Activated CD4-positive, alpha-beta memory T cell treated with anti-CD3 and anti-CD28 coated beads for 36 hours (primary cell): ENCODE measurements at regions of chr1 and their contacts with region 1.

Region 1: GRCh38 chr1:116763787-116764465 is 9.7 kb downstream of the CD2 start:
- DNase-seq: peak; percentile 79
- H3K4me3 Mint-ChIP-seq: peak overlapping the region; percentile 99
- H3K27ac Mint-ChIP-seq: peak overlapping the region; percentile 99
- H3K4me1 Mint-ChIP-seq: peaks cover 88% of the 10 kb centered on the region
- H3K27me3 Mint-ChIP-seq: peaks cover 3% of the 10 kb centered on the region

Region 2: DNA sequence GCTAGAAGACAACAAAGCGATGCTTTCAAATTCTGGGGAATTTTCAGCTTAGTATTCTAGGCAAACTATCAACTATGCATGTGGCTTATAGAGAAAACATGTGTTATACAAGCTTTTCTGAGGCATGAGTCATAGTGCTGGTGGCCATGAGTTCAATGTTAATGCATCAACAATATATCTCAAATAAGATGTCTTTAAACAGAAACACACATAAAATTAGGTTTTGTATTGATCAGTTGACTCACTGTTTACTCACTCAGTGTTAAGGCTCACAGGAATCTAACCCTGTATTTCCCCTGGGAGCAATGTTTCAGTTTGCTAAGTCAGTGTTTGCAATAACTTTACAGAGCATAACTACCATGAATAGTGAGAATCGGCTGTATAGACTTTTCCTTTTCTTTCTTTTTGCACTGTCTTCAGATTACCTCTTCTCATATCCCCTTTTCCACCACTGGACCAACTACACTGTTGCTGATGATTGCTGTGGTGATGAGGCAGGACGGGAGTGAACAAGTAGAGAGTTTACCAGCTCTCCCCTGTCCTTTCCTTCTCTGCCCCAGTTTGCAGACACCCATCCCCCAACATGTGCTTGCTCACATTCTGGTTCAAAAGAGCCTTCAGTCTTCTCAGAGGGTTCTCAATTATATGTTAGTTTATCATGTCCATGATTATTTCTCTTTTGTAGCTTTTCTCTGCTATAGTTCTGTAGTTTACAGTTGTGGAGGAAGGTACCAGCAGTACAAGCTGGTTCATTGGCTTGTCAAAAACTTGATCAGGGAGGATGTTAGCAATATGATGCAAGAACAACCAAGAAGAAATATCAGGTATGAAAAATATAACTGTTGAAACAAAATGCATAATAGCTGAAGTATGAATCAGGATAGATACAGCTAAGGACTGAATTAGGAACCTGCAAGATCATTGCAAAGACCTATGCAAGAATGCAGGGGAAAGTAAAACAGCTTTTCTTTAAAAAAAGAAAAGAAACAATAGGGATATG is 14.2 kb after region 1 on chr1:
- CTCF ChIA-PET with region 1: interaction called, 23 read pairs
- POLR2A ChIA-PET with region 1: interaction called, 629 read pairs
- intact Hi-C with region 1: no loop called
- DNase-seq: no peak
- H3K4me3 Mint-ChIP-seq: peak overlapping the region; percentile 41
- H3K27ac Mint-ChIP-seq: peak overlapping the region; percentile 89
- H3K4me1 Mint-ChIP-seq: peaks cover 46% of the 10 kb centered on the region
- H3K27me3 Mint-ChIP-seq: no peaks in the 10 kb centered on the region

Region 3: DNA sequence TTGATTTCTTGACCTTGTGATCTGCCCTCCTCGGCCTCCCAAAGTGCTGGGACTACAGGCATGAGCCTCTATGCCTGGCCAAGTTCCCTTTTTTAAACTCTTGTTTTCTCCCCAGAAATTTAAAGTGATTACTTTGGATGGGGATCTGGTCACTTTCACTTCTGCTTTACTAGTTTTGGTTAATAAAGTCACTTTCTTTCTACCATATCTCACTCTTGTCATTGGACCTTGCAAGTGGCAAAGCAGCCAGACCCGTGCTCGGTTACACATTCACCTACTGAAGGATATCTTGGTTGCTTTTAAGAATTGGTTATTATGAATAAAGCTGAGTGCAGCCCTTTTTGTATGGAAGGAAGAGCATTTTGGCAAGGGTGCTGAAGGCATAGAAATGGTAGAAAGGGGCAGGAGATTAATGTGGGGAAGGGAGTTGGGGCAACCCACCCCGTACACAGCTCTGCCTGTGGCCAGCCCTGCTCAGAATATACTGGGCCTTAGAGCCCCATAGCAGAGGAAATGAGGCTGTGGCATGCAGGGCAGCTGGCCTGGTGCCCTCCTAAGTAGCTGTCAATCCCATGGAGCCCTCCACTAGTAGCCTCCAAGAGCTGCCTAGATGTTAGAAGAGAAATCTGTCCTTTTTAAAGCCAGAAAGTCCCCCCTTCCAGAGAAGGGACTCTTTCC is 31.0 kb after region 1 on chr1:
- CTCF ChIA-PET with region 1: interaction called, 103 read pairs
- POLR2A ChIA-PET with region 1: interaction called, 1,099 read pairs
- intact Hi-C with region 1: no loop called
- DNase-seq: no peak
- H3K4me3 Mint-ChIP-seq: no peak overlapping the region
- H3K27ac Mint-ChIP-seq: peak overlapping the region; percentile 40
- H3K4me1 Mint-ChIP-seq: peaks cover 66% of the 10 kb centered on the region
- H3K27me3 Mint-ChIP-seq: no peaks in the 10 kb centered on the region

Region 4: DNA sequence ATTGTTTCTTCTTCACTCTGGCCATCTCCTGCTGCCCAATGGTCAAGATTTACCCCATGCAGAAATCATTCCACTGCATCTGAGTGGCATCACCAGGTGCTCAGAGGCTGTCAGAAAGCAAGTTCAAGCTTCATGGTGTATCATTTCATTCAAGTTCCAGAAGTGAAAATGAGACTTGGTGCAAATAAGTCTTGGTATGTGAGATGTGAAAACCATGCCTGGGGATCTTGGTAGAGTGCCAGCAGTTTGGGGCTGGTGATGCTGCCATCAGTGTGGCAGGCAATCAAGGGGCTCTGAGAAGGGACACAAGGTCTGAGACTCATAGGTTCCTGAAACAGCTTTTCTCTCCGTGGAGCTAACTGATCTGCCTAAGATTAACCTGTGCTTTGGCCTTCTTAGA is 42.3 kb after region 1 on chr1:
- CTCF ChIA-PET with region 1: interaction called, 103 read pairs
- POLR2A ChIA-PET with region 1: interaction called, 1,099 read pairs
- intact Hi-C with region 1: loop called (anchors 1 kb)
- DNase-seq: peak; percentile 91
- H3K4me3 Mint-ChIP-seq: peak overlapping the region; percentile 79
- H3K27ac Mint-ChIP-seq: peak overlapping the region; percentile 99
- H3K4me1 Mint-ChIP-seq: peaks cover 78% of the 10 kb centered on the region
- H3K27me3 Mint-ChIP-seq: no peaks in the 10 kb centered on the region

Region 5: GRCh38 chr1:116873680-116874271 is 109.8 kb after region 1 on chr1:
- CTCF ChIA-PET with region 1: interaction called, 6 read pairs
- POLR2A ChIA-PET with region 1: interaction called, 14 read pairs
- intact Hi-C with region 1: no loop called
- DNase-seq: peak; percentile 62
- H3K4me3 Mint-ChIP-seq: no peak overlapping the region
- H3K27ac Mint-ChIP-seq: peak overlapping the region; percentile 35
- H3K4me1 Mint-ChIP-seq: peaks cover 20% of the 10 kb centered on the region
- H3K27me3 Mint-ChIP-seq: no peaks in the 10 kb centered on the region

Region 6: DNA sequence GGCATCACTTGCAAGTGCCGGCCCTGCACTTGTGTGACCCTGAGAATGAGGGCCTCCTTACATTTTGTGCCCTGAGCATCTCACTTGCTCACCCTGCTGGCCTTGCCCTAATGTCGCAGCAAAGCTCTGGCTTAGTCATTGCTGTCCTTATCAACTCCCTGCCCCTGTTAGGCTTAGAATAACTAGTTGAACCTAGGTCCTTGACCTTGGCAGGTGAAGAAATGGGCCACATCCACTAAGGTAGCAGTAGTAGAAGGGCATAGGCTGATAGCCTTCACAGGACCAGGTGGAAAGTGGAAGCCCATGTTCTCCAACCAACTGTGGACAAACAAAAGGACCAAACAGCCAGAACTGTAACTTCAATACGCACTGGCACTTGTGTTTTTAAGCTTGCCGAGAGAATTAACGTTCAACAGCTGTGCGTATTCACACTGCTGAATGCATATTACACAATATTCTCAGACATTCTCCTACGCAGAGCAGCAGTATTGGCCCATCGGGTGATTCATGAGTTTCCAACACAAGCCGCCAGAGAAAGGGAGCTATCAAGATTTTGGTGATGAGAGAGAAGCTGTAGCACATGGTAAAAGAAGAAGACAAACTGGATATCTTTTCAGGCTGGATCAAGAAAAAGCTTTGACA is 118.1 kb after region 1 on chr1:
- CTCF ChIA-PET with region 1: interaction called, 20 read pairs
- POLR2A ChIA-PET with region 1: interaction called, 14 read pairs
- intact Hi-C with region 1: loop called (anchors 5 kb)
- DNase-seq: peak; percentile 66
- H3K4me3 Mint-ChIP-seq: no peak overlapping the region
- H3K27ac Mint-ChIP-seq: no peak overlapping the region
- H3K4me1 Mint-ChIP-seq: peaks cover 19% of the 10 kb centered on the region
- H3K27me3 Mint-ChIP-seq: no peaks in the 10 kb centered on the region